ENCODE measurements at regions of chr19 and their contacts with region 1.

Region 1: GRCh38 chr19:46661020-46661731 is at the start of gene DACT3:
- DNase-seq: peak; percentile 100
- ATAC-seq: peak; percentile 97
- H3K4me3 ChIP-seq: peak within 1 kb of the TSS; percentile 45
- H3K27ac ChIP-seq: peak within 1 kb of the TSS; percentile 28
- H3K4me1 ChIP-seq: no peaks in the 10 kb centered on the region
- H3K27me3 ChIP-seq: no peaks in the 10 kb centered on the region
- total RNA-seq, gene DACT3: 24.6 to 46.5 (median 37.2) TPM

Region 2: DNA sequence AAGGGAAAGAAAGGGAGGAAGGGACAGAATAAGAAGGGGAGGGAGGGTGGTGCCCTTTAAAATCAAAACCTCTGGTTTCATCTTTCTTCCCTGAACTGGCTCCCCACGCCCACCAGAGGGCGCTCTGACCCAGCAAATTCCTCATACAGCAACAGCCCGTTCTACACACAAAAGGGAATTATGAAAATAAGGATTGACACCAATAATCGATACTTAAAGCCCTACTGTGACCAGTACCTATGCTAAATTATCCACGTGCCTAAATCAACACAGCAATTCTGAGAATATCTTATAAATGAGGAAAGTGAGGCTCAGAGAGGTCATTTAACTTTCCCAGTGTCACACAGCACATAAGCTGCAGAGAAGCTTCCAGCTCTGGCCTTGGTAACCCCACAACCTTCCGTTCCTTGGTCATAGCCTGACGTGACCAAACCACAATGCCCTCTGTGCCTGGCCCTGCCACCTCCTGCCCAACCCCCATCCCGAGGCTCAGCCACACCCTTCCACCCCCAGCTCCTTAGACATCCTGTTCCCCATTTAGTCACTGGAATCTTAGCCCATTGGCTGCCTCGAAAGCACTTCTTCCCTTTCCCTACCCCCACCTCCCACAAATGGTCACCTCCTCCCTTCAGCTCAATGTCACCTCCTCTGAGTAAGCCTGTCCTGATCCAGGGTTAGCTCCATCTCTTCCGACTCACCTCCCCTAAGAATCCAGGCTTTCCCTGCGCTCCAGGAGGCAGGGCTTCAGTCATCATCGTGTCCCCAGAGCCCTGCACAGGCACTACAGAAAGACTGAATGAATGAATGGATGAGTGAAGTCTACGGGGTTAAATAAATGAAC is 131.3 kb before region 1 on chr19:
- intact Hi-C with region 1: loop called in 1 of 4 experiments (anchors 5 kb)
- DNase-seq: peak; percentile 69 to 86 (median 85)
- ATAC-seq: peak; percentile 72 to 78
- H3K4me3 ChIP-seq: no peak overlapping the region
- H3K27ac ChIP-seq: no peak overlapping the region
- H3K4me1 ChIP-seq: no peaks in the 10 kb centered on the region
- H3K27me3 ChIP-seq: no peaks in the 10 kb centered on the region

Region 3: GRCh38 chr19:46564701-46565100 is 96.5 kb before region 1 on chr19:
- intact Hi-C with region 1: no loop called
- DNase-seq: no peak
- ATAC-seq: no peak
- H3K4me3 ChIP-seq: no peak overlapping the region
- H3K27ac ChIP-seq: no peak overlapping the region
- H3K4me1 ChIP-seq: no peaks in the 10 kb centered on the region
- H3K27me3 ChIP-seq: no peaks in the 10 kb centered on the region

Measured in right cardiac atrium (tissue), 5 donors.